IMR-90 (cell line): ENCODE measurements at regions of chr20 and their contacts with region 1.

Region 1: DNA sequence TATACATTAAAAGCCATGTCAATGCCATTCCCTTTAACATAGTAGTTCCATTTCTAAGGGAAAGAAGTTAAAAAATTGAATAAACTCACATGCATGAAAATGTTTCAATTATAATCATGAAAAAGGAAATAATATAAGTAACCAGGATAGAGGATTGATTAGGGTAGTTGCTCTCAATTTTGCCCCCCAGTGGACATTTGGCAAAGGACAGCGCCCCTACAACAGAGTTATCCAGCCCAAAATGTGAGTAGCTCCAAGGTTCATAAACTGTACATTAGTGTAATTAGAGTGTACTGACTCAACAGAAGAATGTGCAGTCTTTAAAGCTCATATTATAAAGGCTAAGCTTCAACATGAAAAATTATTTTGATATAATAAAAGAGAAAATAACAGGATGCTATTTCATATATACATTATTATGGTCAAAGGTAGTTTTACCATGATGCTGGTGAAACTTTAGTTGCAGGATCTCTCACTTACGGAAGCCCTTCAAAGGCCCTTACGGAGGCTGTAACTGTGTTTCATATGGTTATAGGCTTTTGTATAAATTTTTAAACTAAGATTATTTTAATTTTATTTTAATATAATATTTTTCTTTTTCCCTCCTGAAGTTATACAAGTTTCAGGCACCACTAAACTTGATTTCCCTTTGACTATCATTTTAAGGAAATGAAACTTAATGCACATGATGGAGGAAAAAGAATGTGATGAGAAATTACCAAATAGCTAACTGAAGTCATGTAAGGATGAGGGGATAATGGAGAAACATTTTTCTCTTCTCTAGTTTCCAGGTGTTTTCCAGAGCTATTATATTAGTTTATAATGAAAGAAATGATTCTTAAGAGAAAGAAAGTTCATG is 403.6 kb downstream of the PLCB1 start:
- DNase-seq: no peak
- ATAC-seq: no peak
- H3K4me3 ChIP-seq: no peak overlapping the region
- H3K27ac ChIP-seq: no peak overlapping the region
- H3K4me1 ChIP-seq: peaks cover 2% of the 10 kb centered on the region; the same call in 1 of the 2 replicates
- H3K27me3 ChIP-seq: no peaks in the 10 kb centered on the region
- CTCF ChIP-seq: peak; percentile 47
- POLR2A ChIP-seq: no peak
- RAD21 ChIP-seq: peak; percentile 42

Region 2: DNA sequence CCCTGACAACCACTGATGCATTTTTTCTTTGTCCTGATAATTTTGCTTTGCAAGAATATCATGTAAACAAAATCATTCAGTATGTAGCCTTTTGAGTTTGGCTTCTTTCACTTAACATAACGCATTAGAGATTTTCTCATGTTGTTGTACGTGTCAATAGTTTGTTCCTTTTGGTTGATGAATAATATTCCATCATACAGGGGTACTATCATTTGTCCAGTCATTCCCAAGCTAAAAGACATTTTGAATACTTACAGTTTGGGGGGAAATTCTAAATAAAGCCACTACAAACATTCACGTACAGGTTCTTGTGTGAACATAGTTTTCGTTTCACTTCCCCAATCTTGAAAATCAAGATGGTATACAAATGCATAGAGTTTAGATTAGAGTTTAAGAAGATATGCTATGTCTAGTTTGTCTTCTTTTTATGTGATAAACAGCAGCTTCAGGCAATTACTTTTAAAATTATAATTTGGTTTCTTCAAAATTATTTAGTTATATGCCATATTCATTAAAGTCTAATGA is 600.5 kb before region 1 on chr20:
- CTCF ChIA-PET with region 1: no interaction called
- POLR2A ChIA-PET with region 1: no interaction called
- dilution Hi-C with region 1: no loop called
- in situ Hi-C with region 1: no loop called
- intact Hi-C with region 1: loop called (anchors 10 kb)
- DNase-seq: no peak
- ATAC-seq: no peak
- H3K4me3 ChIP-seq: no peak overlapping the region
- H3K27ac ChIP-seq: no peak overlapping the region
- H3K4me1 ChIP-seq: no peaks in the 10 kb centered on the region
- H3K27me3 ChIP-seq: peaks cover 9% of the 10 kb centered on the region
- CTCF ChIP-seq: no peak
- POLR2A ChIP-seq: no peak
- RAD21 ChIP-seq: no peak

Region 3: DNA sequence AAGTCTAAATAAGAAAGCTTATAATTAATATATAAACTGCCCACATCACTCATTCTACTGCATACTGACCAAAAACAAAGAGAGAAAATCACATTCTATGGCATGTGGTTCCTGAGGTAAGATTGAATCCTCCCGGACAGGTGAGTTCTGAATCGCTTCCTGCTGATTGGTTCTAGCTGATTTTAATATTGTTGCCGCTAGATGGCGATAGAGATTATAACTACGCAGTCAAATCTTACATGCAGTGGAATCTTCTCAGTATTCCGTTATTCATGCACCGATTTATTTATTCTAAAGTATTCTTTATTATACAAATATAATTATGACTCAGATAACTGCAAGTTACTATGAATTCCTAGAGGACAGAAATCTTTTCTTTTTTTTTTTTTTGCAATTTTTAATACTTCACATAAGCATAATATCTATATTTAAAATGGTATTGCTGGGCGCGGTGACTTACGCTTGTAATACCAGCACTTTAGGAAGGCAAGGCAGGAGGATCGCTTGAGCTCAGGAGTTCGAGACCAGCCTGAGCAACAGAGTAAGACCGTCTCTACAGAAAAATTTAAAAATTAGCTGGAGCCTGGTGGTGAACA is 491.8 kb before region 1 on chr20:
- CTCF ChIA-PET with region 1: no interaction called
- POLR2A ChIA-PET with region 1: no interaction called
- dilution Hi-C with region 1: no loop called
- in situ Hi-C with region 1: no loop called
- intact Hi-C with region 1: loop called (anchors 5 kb)
- DNase-seq: peak; percentile 68
- ATAC-seq: peak; percentile 62
- H3K4me3 ChIP-seq: no peak overlapping the region
- H3K27ac ChIP-seq: no peak overlapping the region
- H3K4me1 ChIP-seq: no peaks in the 10 kb centered on the region
- H3K27me3 ChIP-seq: peaks cover 7% of the 10 kb centered on the region
- CTCF ChIP-seq: peak; percentile 71
- POLR2A ChIP-seq: no peak
- RAD21 ChIP-seq: peak; percentile 73

Region 4: GRCh38 chr20:8449123-8449522 is 86.5 kb before region 1 on chr20:
- CTCF ChIA-PET with region 1: no interaction called
- POLR2A ChIA-PET with region 1: no interaction called
- dilution Hi-C with region 1: no loop called
- in situ Hi-C with region 1: no loop called
- intact Hi-C with region 1: no loop called
- DNase-seq: peak; percentile 28
- ATAC-seq: no peak
- H3K4me3 ChIP-seq: no peak overlapping the region
- H3K27ac ChIP-seq: no peak overlapping the region
- H3K4me1 ChIP-seq: peaks cover 1% of the 10 kb centered on the region
- H3K27me3 ChIP-seq: no peaks in the 10 kb centered on the region
- CTCF ChIP-seq: no peak
- POLR2A ChIP-seq: no peak
- RAD21 ChIP-seq: no peak